HCT116 (cell line): ENCODE measurements at regions of chr5 and their contacts with region 1.

Region 1: GRCh38 chr5:115460472-115460871 is 84.1 kb downstream of the FEM1C start:
- DNase-seq: peak; percentile 87
- ATAC-seq: peak; percentile 58
- H3K4me3 ChIP-seq: peak overlapping the region in 1 of 2 experiments; percentile 27; a peak in 2 of 4 replicates
- H3K27ac ChIP-seq: peak overlapping the region; percentile 73
- H3K4me1 ChIP-seq: peaks cover 25 to 97% of the 10 kb centered on the region in 2 experiments
- H3K27me3 ChIP-seq: no peaks in the 10 kb centered on the region
- CTCF ChIP-seq: no peak
- POLR2A ChIP-seq: no peak
- RAD21 ChIP-seq: peak; percentile 29; the same call in 1 of the 2 replicates

Region 2: GRCh38 chr5:115530426-115530825 is 70.0 kb after region 1 on chr5:
- CTCF ChIA-PET with region 1: no interaction called
- POLR2A ChIA-PET with region 1: no interaction called
- RAD21 ChIA-PET with region 1: no interaction called
- intact Hi-C with region 1: loop called (anchors 5 kb)
- DNase-seq: no peak
- ATAC-seq: no peak
- H3K4me3 ChIP-seq: no peak overlapping the region
- H3K27ac ChIP-seq: no peak overlapping the region
- H3K4me1 ChIP-seq: peaks cover 0 to 28% of the 10 kb centered on the region in 2 experiments; a peak in 2 of 4 replicates
- H3K27me3 ChIP-seq: no peaks in the 10 kb centered on the region
- CTCF ChIP-seq: no peak
- POLR2A ChIP-seq: no peak
- RAD21 ChIP-seq: no peak